ENCODE measurements at regions of chr10 and their contacts with region 1.

Region 1: DNA sequence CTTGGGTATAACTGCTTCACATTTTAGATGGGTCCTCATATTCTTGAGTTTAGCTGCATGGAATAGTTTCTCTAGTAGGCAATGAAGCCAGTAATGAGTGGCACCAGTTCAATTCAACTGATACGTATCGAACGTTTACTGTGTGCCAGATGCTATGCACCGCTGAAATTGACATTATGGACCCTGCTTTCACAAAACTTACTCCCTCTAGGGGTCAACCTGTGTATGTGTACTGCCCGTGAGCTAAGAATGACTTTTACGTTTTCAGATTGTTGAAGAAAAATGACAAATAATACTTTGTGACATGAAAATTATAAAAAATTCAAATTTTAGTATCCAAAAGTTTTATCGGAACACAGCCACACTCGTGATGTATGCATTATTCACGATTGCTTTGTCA is 95.5 kb downstream of the ZMYND11 start:
- DNase-seq: no peak
- H3K4me3 ChIP-seq: no peak overlapping the region
- H3K27ac ChIP-seq: no peak overlapping the region
- H3K4me1 ChIP-seq: no peaks in the 10 kb centered on the region
- H3K27me3 ChIP-seq: no peaks in the 10 kb centered on the region
- CTCF ChIP-seq: peak in 2 of 3 experiments; percentile 37 to 79; a peak in 2 of 4 replicates
- EP300 ChIP-seq: no peak
- POLR2A ChIP-seq: no peak
- RAD21 ChIP-seq: peak; percentile 30 to 46; a peak in 3 of 4 replicates

Region 2: DNA sequence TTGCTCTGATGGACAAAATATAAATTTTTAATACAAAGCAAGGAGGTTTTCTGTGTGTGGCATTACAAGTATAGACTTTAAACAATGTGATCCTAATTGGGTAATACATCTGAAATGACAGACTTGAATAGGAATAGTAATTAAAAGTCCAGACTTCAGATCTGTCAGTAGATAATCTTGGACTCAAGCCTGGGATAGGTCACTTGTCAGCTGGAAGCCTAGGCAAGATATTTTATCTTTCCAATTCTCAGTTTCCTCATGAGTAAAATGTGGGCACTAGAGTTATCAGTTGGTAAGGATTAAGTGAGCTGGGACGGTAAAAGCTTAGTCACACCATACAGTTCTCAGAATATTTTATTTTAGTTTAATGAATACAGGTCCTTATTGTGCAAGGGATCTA is 105.9 kb before region 1 on chr10:
- CTCF ChIA-PET with region 1: no interaction called
- POLR2A ChIA-PET with region 1: no interaction called
- DNase-seq: no peak
- H3K4me3 ChIP-seq: no peak overlapping the region
- H3K27ac ChIP-seq: no peak overlapping the region
- H3K4me1 ChIP-seq: no peaks in the 10 kb centered on the region
- H3K27me3 ChIP-seq: no peaks in the 10 kb centered on the region
- CTCF ChIP-seq: no peak
- EP300 ChIP-seq: no peak
- POLR2A ChIP-seq: no peak
- RAD21 ChIP-seq: no peak

Region 3: DNA sequence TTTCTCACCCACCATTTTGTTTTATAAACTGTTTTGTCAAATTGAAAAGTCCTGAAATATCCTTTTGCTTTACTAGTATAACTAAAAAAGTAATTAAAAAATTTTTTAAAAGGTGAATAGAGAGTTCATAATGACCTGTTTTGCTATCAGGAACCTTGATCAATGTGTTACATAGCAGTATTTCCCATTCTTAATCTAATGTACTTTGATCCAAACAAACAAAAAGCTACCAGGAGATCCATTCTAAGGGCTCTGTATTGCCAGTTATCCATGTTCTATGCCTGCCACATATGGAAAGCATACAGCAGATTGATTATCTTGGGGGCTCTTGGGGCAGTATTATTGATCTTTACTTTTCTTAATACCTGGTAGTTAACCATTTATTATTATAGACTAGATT is 63.4 kb before region 1 on chr10:
- CTCF ChIA-PET with region 1: no interaction called
- POLR2A ChIA-PET with region 1: no interaction called
- DNase-seq: no peak
- H3K4me3 ChIP-seq: no peak overlapping the region
- H3K27ac ChIP-seq: no peak overlapping the region
- H3K4me1 ChIP-seq: peaks cover 0 to 3% (median 0%) of the 10 kb centered on the region in 4 experiments; a peak in 2 of 7 replicates
- H3K27me3 ChIP-seq: no peaks in the 10 kb centered on the region
- CTCF ChIP-seq: no peak
- EP300 ChIP-seq: no peak
- POLR2A ChIP-seq: no peak
- RAD21 ChIP-seq: no peak

Region 4: DNA sequence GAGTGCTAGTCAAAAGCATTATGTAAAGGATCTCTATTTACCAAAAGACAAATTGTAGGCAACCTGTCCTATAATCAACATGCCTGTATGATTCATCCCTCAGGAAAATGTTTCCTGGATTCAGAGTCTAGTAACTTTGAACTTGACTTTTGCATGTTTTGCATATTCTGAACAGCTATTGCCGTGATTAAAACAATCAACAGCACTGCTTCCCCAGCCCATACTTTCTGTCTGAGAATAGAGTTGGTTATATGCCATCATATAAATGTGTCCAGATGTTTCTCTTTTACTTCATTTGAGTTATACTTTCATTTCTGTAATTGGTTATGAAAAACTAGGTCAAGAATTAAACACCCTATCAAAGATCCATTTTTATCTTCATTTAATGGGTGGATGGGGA is 11.9 kb before region 1 on chr10:
- CTCF ChIA-PET with region 1: interaction called, 36 read pairs
- POLR2A ChIA-PET with region 1: interaction called, 5 read pairs
- DNase-seq: no peak
- H3K4me3 ChIP-seq: no peak overlapping the region
- H3K27ac ChIP-seq: no peak overlapping the region
- H3K4me1 ChIP-seq: no peaks in the 10 kb centered on the region
- H3K27me3 ChIP-seq: no peaks in the 10 kb centered on the region
- CTCF ChIP-seq: no peak
- EP300 ChIP-seq: no peak
- POLR2A ChIP-seq: no peak
- RAD21 ChIP-seq: no peak

Region 5: GRCh38 chr10:248307-248706 is 17.6 kb after region 1 on chr10:
- CTCF ChIA-PET with region 1: interaction called, 36 read pairs
- POLR2A ChIA-PET with region 1: no interaction called
- DNase-seq: no peak
- H3K4me3 ChIP-seq: no peak overlapping the region
- H3K27ac ChIP-seq: no peak overlapping the region; the same call in 1 of the 2 replicates
- H3K4me1 ChIP-seq: no peaks in the 10 kb centered on the region
- H3K27me3 ChIP-seq: no peaks in the 10 kb centered on the region
- CTCF ChIP-seq: no peak
- EP300 ChIP-seq: no peak
- POLR2A ChIP-seq: no peak
- RAD21 ChIP-seq: no peak

Region 6: DNA sequence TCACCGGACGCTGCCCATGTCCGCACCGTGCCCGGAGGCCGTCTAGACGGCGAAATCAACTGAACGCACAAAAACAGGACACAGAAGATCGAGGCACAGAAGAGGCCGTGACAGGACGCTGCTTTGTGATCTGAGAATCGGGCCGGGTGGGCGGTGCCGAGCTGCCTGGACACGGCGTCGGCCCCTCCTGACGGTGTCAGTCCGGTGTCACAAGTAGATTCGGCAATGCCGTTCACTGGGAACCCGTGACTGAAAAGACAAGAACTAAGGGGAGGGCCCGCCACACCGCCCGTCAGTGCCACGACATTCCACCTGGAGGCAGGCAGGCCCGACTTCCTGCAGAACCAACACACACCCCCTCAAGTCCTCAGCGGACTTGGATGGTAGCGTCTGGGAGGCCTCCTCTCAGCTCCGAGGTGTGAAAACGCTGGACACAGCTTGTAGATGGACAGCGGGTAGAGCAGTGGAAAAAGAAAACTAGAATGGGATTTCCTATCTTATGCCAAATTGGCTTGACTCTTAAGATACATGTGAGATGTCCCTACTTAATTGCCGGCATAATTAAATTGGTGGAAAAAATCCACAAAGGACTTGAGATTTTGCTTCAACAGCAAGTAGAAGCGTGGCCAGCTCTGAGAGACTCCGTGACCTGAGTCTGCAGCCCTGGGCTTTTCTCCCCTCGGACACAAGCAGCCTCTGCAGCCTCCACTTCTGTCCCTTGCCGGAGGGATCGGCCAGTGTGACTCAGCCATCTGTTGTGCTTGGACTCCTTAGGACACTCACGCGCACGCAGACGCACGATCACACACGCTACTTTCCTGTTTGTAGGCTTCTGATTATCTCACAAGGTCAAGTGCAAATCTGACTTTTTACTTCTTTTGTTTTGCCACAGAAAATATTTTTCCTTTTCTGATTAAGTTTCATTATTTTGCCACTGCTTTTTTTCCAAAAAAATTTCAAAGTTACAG is 189.7 kb after region 1 on chr10:
- CTCF ChIA-PET with region 1: no interaction called
- POLR2A ChIA-PET with region 1: no interaction called
- DNase-seq: no peak
- H3K4me3 ChIP-seq: no peak overlapping the region
- H3K27ac ChIP-seq: no peak overlapping the region
- H3K4me1 ChIP-seq: no peaks in the 10 kb centered on the region
- H3K27me3 ChIP-seq: no peaks in the 10 kb centered on the region
- CTCF ChIP-seq: no peak
- EP300 ChIP-seq: no peak
- POLR2A ChIP-seq: no peak
- RAD21 ChIP-seq: no peak

Measured in H1 (cell line).